ENCODE measurements at regions of chr7 and their contacts with region 1.

Region 1: GRCh38 chr7:21891291-21891690 is 54.4 kb downstream of the CDCA7L start:
- DNase-seq: no peak
- H3K4me3 ChIP-seq: no peak overlapping the region
- H3K27ac ChIP-seq: no peak overlapping the region
- H3K4me1 ChIP-seq: no peaks in the 10 kb centered on the region
- H3K27me3 ChIP-seq: no peaks in the 10 kb centered on the region
- CTCF ChIP-seq: no peak

Region 2: GRCh38 chr7:21486511-21486910 is 404.8 kb before region 1 on chr7:
- intact Hi-C with region 1: no loop called
- DNase-seq: no peak
- H3K4me3 ChIP-seq: no peak overlapping the region
- H3K27ac ChIP-seq: no peak overlapping the region
- H3K4me1 ChIP-seq: peaks cover 0 to 3% (median 0%) of the 10 kb centered on the region in 4 donors
- H3K27me3 ChIP-seq: no peaks in the 10 kb centered on the region
- CTCF ChIP-seq: no peak

Region 3: GRCh38 chr7:21912305-21912704 is 21.0 kb after region 1 on chr7:
- intact Hi-C with region 1: loop called (anchors 2 kb)
- DNase-seq: no peak
- H3K4me3 ChIP-seq: no peak overlapping the region
- H3K27ac ChIP-seq: no peak overlapping the region
- H3K4me1 ChIP-seq: no peaks in the 10 kb centered on the region
- H3K27me3 ChIP-seq: no peaks in the 10 kb centered on the region
- CTCF ChIP-seq: no peak

Region 4: GRCh38 chr7:21939136-21939857 is 48.0 kb after region 1 on chr7:
- intact Hi-C with region 1: no loop called
- DNase-seq: no peak
- H3K4me3 ChIP-seq: no peak overlapping the region
- H3K27ac ChIP-seq: no peak overlapping the region
- H3K4me1 ChIP-seq: peaks cover 0 to 5% (median 0%) of the 10 kb centered on the region in 4 donors
- H3K27me3 ChIP-seq: peaks cover 0 to 5% of the 10 kb centered on the region in 2 donors
- CTCF ChIP-seq: no peak

Measured in tibial artery (tissue), 4 donors.